ENCODE measurements at regions of chr14 and their contacts with region 1.

Region 1: DNA sequence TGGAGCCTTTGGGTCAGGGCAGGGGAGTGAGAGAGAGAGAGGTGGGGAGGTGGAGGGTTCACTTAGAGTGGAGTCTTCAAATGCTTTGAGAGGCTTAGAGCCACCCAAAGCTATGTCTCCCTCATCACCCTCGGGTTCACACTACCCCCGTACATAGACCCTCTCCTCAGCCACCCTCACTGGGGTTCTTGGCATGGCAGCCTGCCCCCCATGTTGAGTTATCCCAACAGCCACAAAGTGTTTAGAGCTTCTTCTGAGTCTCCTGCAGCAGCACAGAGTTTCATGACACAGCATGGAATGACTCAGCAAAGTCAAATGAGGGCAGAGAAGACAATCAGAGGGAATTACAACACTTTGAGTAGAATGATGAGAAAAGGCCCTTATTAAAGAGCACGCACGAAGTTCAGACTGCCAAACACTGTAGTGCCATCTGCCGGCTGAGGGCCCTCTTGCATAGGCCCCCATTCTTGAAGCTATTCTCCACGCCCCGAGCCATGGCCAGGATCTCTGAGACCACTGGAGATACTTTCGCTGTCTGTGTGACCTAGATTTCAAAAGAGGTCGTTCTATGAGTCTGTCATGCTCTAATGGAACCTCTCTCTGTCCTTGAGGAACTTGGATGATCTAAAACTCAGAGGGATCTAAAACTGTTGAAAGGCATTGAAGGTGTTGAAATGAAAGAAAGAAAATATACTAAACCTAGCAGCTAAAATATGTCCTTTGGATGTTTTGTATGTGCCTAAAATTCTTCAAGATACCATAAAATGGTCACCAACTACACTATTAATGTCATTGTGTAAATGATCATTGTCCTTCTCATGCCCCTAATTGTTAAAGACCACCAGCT is 221.9 kb downstream of the PELI2 start:
- DNase-seq: peak; percentile 33
- H3K4me3 ChIP-seq: no peak overlapping the region
- H3K27ac ChIP-seq: no peak overlapping the region
- H3K4me1 ChIP-seq: no peaks in the 10 kb centered on the region
- CTCF ChIP-seq: peak; percentile 68

Region 2: DNA sequence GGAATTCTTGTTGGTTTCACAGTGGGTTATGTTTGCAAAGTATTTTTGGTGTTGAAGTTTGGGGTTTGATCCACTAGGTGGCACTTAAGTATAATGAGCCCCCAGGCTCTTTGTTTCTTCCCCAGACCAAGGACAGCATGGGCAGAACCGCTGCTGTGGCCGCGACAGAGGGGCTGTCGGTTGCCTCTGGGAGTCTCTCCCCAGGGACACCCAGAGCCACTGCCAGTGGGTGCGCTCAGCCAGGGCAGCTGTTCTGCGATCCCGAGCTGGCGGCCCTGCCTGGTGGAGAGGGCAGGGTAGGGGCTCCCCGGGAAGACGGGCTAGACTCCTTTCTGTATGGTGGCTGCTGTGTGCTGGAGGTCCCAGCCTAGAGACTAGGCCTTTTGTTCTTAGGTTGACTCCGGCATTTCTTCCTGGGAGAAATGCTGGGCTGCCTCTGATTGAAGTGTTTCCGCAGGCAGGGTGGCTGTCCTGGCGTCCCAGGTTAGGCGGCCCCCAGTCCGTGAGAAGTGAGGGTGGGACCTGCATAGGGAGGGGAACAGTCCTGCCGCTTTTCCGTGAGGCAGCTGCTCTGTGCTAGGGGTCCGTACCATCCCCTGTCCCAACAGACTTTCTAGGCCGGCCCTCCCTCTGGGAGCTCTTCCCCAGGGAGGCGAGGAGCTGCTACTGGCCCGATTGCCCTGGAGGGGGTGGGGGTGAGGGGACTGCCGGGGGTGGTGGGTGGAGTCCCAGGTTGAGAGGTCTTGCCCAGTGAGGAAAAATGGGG is 475.0 kb before region 1 on chr14:
- CTCF ChIA-PET with region 1: no interaction called
- POLR2A ChIA-PET with region 1: no interaction called
- intact Hi-C with region 1: loop called (anchors 2 kb)
- DNase-seq: peak; percentile 23
- H3K4me3 ChIP-seq: no peak overlapping the region
- H3K27ac ChIP-seq: no peak overlapping the region
- H3K4me1 ChIP-seq: no peaks in the 10 kb centered on the region
- CTCF ChIP-seq: peak; percentile 75

Region 3: GRCh38 chr14:56065621-56066290 is 274.3 kb before region 1 on chr14:
- CTCF ChIA-PET with region 1: no interaction called
- POLR2A ChIA-PET with region 1: no interaction called
- intact Hi-C with region 1: no loop called
- DNase-seq: no peak
- H3K4me3 ChIP-seq: no peak overlapping the region
- H3K27ac ChIP-seq: no peak overlapping the region
- H3K4me1 ChIP-seq: no peaks in the 10 kb centered on the region
- CTCF ChIP-seq: no peak